CD4-positive, alpha-beta memory T cell (primary cell): ENCODE measurements at regions of chr7 and their contacts with region 1.

Region 1: GRCh38 chr7:27210441-27211083 is 10.7 kb upstream of the HOXA13 start:
- DNase-seq: peak in 1 of 5 donors; percentile 29
- H3K4me3 ChIP-seq: no peak overlapping the region
- H3K4me3 Mint-ChIP-seq: peak overlapping the region; percentile 9 to 72 (median 56)
- H3K27ac ChIP-seq: no peak overlapping the region
- H3K27ac Mint-ChIP-seq: peak overlapping the region in 1 of 7 donors; percentile 47
- H3K4me1 ChIP-seq: peaks cover 6% of the 10 kb centered on the region
- H3K4me1 Mint-ChIP-seq: peaks cover 6 to 20% (median 14%) of the 10 kb centered on the region in 4 donors
- H3K27me3 ChIP-seq: peaks cover 44% of the 10 kb centered on the region
- H3K27me3 Mint-ChIP-seq: peaks cover 66 to 83% of the 10 kb centered on the region in 2 donors

Region 2: DNA sequence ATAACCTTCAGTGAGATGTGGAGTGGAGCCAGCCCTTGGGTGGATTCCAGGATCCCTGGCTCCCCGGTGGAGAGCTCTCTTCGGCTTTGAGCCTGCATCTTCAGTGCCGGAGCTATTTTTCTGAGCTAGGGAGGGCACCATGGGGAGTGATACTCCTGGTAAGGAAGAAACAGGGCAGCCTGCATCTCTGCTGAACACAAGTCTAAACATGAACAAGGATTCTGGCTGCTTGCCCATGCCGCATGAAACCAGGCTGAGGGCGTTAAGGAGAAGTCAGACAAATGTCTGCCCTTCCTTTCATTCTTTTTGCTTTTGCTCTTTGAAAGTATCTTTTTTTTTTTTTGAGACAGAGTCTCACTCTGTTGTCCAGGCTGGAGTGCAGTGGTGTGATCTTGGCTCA is 92.5 kb after region 1 on chr7:
- CTCF ChIA-PET with region 1: no interaction called
- POLR2A ChIA-PET with region 1: no interaction called
- intact Hi-C with region 1: no loop called
- DNase-seq: no peak
- H3K4me3 ChIP-seq: no peak overlapping the region
- H3K4me3 Mint-ChIP-seq: no peak overlapping the region
- H3K27ac ChIP-seq: no peak overlapping the region
- H3K27ac Mint-ChIP-seq: no peak overlapping the region
- H3K4me1 ChIP-seq: no peaks in the 10 kb centered on the region
- H3K4me1 Mint-ChIP-seq: peaks cover 0 to 2% (median 0%) of the 10 kb centered on the region in 4 donors
- H3K27me3 ChIP-seq: no peaks in the 10 kb centered on the region
- H3K27me3 Mint-ChIP-seq: peaks cover 10 to 19% of the 10 kb centered on the region in 2 donors

Region 3: GRCh38 chr7:27576360-27576944 is 365.9 kb after region 1 on chr7:
- CTCF ChIA-PET with region 1: interaction called, 12 read pairs
- POLR2A ChIA-PET with region 1: no interaction called
- intact Hi-C with region 1: loop called (anchors 5 kb)
- DNase-seq: peak in 4 of 5 donors; percentile 5 to 31 (median 15)
- H3K4me3 ChIP-seq: no peak overlapping the region
- H3K4me3 Mint-ChIP-seq: no peak overlapping the region
- H3K27ac ChIP-seq: no peak overlapping the region
- H3K27ac Mint-ChIP-seq: no peak overlapping the region
- H3K4me1 ChIP-seq: no peaks in the 10 kb centered on the region
- H3K4me1 Mint-ChIP-seq: peaks cover 0 to 2% (median 0%) of the 10 kb centered on the region in 4 donors
- H3K27me3 ChIP-seq: no peaks in the 10 kb centered on the region
- H3K27me3 Mint-ChIP-seq: no peaks in the 10 kb centered on the region